AG04449 (cell line): ENCODE measurements at regions of chr5 and their contacts with region 1.

Region 1: DNA sequence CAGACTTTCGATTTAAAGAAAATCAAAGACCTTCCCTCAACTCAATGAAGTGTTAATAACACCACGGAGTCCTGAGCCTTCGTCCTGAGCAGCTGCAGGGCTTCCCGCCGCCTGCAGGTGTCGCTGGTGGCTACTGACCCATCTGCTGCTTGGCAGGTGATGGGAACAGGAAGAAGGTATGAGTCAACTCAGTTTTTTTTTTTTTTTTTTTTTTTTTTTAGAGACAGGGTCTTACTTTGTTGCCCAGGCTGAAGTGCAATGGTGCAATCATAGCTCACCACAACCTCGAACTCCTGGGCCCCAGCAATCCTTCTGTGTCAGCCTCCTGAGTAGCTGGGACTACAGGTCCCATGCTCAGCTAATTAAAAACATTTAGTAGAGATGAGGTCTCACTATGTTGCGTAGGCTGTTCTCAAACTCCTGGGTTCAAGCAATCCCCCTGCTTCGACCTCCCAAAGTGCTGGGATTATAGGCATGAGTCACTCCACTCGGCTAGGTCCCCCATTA is 185.7 kb upstream of the IL12B start:
- DNase-seq: no peak
- H3K4me3 ChIP-seq: no peak overlapping the region
- CTCF ChIP-seq: peak; percentile 74

Region 2: GRCh38 chr5:159504857-159505304 is 11.1 kb before region 1 on chr5:
- CTCF ChIA-PET with region 1: interaction called, 11 read pairs
- POLR2A ChIA-PET with region 1: no interaction called
- DNase-seq: no peak
- H3K4me3 ChIP-seq: no peak overlapping the region
- CTCF ChIP-seq: no peak